ENCODE measurements at regions of chr11 and their contacts with region 1.

Region 1: DNA sequence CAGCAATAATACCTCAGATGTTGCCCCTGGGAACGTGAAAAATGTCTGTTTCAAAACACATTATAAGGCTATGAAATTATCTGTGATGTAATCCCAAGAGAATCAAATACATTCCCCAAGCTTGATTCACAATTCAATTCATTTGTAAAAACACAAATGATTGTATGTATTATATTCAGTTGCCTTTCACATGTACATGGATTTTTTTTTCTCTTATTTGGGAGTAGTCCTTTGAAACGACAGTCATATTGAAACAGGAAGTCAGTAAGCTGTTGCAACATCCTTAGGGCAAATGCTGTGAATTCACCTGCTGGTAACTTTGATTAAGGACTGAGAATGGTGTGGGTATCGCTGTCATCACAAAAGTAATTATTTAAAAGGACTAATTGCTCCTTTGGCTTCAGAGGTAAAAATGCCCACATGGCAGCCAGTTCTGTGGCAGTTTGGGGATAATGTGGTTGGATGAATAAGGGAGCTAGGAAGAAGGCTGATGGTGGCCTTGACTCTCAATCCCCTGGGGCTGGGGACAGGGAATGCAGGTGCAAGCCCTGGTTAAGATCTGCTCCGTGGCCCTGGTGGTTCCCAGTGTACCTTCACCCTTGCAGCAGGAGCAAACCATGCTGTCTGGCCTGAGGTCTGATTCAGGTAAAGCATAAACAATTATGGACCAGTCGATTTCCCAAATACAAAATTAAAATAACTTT is 13.2 kb downstream of the EHF start:
- DNase-seq: no peak
- ATAC-seq: peak; percentile 84
- H3K4me3 Mint-ChIP-seq: peak overlapping the region; percentile 21
- H3K27ac Mint-ChIP-seq: peak overlapping the region; percentile 85
- H3K4me1 Mint-ChIP-seq: peaks cover 16% of the 10 kb centered on the region
- H3K27me3 Mint-ChIP-seq: no peaks in the 10 kb centered on the region
- CTCF ChIP-seq: no peak

Region 2: GRCh38 chr11:34454308-34455032 is 179.7 kb before region 1 on chr11:
- CTCF ChIA-PET with region 1: no interaction called
- POLR2A ChIA-PET with region 1: no interaction called
- intact Hi-C with region 1: no loop called
- DNase-seq: no peak
- ATAC-seq: no peak
- H3K4me3 Mint-ChIP-seq: no peak overlapping the region
- H3K27ac Mint-ChIP-seq: no peak overlapping the region
- H3K4me1 Mint-ChIP-seq: peaks cover 8% of the 10 kb centered on the region
- H3K27me3 Mint-ChIP-seq: no peaks in the 10 kb centered on the region
- CTCF ChIP-seq: no peak

Region 3: DNA sequence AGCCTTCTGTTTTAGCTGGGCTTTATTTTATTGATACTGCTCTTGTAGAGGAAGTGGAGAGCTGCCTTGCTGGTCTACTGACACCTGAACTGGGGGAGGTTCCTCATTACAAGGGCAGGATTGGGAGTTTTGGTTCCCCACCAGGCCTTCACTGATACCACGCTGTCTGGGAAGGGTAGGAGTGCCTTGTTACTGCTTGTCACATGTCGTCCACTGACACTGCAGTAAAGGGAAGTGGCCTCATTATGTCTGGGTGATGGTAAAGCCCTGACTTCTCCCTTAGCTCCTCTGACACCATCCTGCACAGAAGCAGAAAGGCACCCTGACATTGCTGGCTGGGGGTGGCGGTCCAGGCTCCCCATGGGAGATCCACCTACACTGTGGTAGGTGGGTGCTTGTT is 81.9 kb before region 1 on chr11:
- CTCF ChIA-PET with region 1: no interaction called
- POLR2A ChIA-PET with region 1: no interaction called
- intact Hi-C with region 1: no loop called
- DNase-seq: no peak
- ATAC-seq: no peak
- H3K4me3 Mint-ChIP-seq: no peak overlapping the region
- H3K27ac Mint-ChIP-seq: no peak overlapping the region
- H3K4me1 Mint-ChIP-seq: no peaks in the 10 kb centered on the region
- H3K27me3 Mint-ChIP-seq: peaks cover 9% of the 10 kb centered on the region
- CTCF ChIP-seq: no peak

Region 4: GRCh38 chr11:34614344-34615104 is 19.6 kb before region 1 on chr11:
- CTCF ChIA-PET with region 1: no interaction called
- POLR2A ChIA-PET with region 1: interaction called, 4 read pairs
- intact Hi-C with region 1: loop called (anchors 1 kb)
- DNase-seq: no peak
- ATAC-seq: peak; percentile 53
- H3K4me3 Mint-ChIP-seq: peak overlapping the region; percentile 0
- H3K27ac Mint-ChIP-seq: peak overlapping the region; percentile 86
- H3K4me1 Mint-ChIP-seq: peaks cover 30% of the 10 kb centered on the region
- H3K27me3 Mint-ChIP-seq: no peaks in the 10 kb centered on the region
- CTCF ChIP-seq: no peak

Region 5: GRCh38 chr11:34624069-34624468 is 10.1 kb before region 1 on chr11:
- CTCF ChIA-PET with region 1: no interaction called
- POLR2A ChIA-PET with region 1: no interaction called
- intact Hi-C with region 1: loop called (anchors 1 kb)
- DNase-seq: peak; percentile 46
- ATAC-seq: peak; percentile 94
- H3K4me3 Mint-ChIP-seq: peak overlapping the region; percentile 66
- H3K27ac Mint-ChIP-seq: peak overlapping the region; percentile 37
- H3K4me1 Mint-ChIP-seq: peaks cover 31% of the 10 kb centered on the region
- H3K27me3 Mint-ChIP-seq: peaks cover 6% of the 10 kb centered on the region
- CTCF ChIP-seq: no peak

Region 6: DNA sequence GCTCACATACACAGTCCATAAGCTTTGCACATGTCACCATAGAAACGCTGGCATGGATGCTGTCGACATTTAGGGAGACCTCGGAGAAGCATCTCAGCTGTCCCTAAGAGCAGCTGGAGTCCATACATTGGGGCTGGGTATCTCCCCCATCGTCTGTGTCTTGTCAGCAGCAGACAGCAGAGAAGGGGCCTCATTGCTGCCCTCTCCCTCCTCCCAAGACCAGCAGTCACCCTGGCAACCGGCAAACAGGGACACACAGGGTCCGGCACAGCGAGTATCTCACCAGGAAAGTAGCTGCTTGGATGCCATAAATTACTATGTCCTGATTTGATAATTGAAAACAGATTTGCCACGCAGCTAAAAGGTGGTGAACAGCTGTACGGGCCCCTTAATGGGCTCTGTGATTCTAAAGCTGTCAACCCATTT is 589.2 kb after region 1 on chr11:
- CTCF ChIA-PET with region 1: no interaction called
- POLR2A ChIA-PET with region 1: no interaction called
- intact Hi-C with region 1: no loop called
- DNase-seq: no peak
- ATAC-seq: no peak
- H3K4me3 Mint-ChIP-seq: no peak overlapping the region
- H3K27ac Mint-ChIP-seq: no peak overlapping the region
- H3K4me1 Mint-ChIP-seq: peaks cover 19% of the 10 kb centered on the region
- H3K27me3 Mint-ChIP-seq: no peaks in the 10 kb centered on the region
- CTCF ChIP-seq: no peak